PC-3 (cell line): ENCODE measurements at regions of chr1 and their contacts with region 1.

Region 1: DNA sequence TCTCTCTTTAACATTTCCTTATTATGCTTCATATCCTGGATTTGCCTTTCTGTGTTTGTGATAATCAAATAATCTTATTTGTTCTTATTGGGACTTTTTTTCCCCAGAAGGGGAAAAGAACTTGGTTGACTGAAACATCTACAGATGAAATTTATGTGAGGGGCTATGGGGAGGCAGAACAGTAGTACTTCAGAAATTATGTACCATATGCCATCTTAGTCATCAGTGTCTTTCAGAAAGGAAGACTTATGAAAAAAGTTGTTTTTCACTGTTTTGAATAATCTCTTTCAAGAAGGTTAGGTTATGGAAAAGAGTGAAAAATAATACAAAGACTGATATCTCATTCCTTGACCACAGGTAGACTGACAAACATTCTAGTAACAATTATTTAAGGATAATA is 30.2 kb upstream of the TRAF5 start:
- DNase-seq: no peak
- ATAC-seq: no peak
- H3K4me3 ChIP-seq: no peak overlapping the region
- H3K27ac ChIP-seq: no peak overlapping the region
- H3K4me1 ChIP-seq: no peaks in the 10 kb centered on the region
- H3K27me3 ChIP-seq: no peaks in the 10 kb centered on the region
- CTCF ChIP-seq: no peak

Region 2: DNA sequence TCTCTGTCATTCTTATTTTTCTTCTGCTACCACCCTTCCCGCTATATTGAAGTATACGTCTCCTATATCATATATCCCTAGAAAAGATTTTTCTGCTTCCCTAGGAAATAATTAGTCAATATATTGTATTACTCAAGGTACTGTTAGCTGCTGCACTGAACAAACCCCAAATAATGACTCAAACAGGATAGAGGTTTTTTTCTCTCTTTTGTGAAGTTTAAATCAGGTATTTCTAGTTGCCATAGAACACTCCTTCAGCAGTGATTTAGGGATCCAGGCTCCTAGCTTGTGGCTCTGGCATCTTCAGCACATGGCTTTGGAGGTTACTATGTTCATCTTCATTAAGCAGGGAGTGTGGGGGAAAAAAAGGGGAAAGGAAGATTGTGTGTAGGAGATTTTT is 1340.3 kb before region 1 on chr1:
- CTCF ChIA-PET with region 1: interaction called, 11 read pairs
- POLR2A ChIA-PET with region 1: no interaction called
- intact Hi-C with region 1: no loop called
- DNase-seq: peak; percentile 84
- ATAC-seq: peak; percentile 94
- H3K4me3 ChIP-seq: no peak overlapping the region
- H3K27ac ChIP-seq: peak overlapping the region; percentile 63
- H3K4me1 ChIP-seq: peaks cover 32% of the 10 kb centered on the region
- H3K27me3 ChIP-seq: no peaks in the 10 kb centered on the region
- CTCF ChIP-seq: no peak

Region 3: GRCh38 chr1:211169353-211169752 is 127.0 kb before region 1 on chr1:
- CTCF ChIA-PET with region 1: no interaction called
- POLR2A ChIA-PET with region 1: no interaction called
- intact Hi-C with region 1: no loop called
- DNase-seq: no peak
- ATAC-seq: no peak
- H3K4me3 ChIP-seq: no peak overlapping the region
- H3K27ac ChIP-seq: no peak overlapping the region
- H3K4me1 ChIP-seq: 0 out of 2 replicates have a peak, but pooled peaks cover 2% of the 10 kb centered on the region
- H3K27me3 ChIP-seq: peaks cover 3% of the 10 kb centered on the region; the same call in 1 of the 2 replicates
- CTCF ChIP-seq: no peak

Region 4: DNA sequence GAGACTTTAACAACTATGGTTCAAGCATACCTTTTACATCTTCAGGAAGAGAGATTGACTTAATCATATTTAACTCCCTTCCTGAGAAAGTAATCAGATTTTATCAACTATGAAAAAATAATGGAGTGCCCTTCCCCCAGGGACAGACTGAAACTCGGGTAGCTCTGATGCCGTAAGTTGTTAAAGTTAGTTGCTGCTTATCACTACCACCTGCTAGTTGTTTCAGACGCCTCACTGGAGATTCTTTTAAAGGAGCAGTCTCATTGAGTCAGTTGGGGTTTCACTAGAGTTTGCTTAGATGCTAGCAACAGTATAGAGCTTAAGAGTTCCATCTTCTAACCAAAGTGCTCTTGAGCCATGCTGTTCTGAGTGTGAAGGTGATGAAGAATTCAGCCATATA is 13.2 kb after region 1 on chr1:
- CTCF ChIA-PET with region 1: no interaction called
- POLR2A ChIA-PET with region 1: no interaction called
- intact Hi-C with region 1: no loop called
- DNase-seq: no peak
- ATAC-seq: no peak
- H3K4me3 ChIP-seq: no peak overlapping the region
- H3K27ac ChIP-seq: no peak overlapping the region
- H3K4me1 ChIP-seq: no peaks in the 10 kb centered on the region
- H3K27me3 ChIP-seq: no peaks in the 10 kb centered on the region
- CTCF ChIP-seq: no peak